Aorta (tissue), 5 donors: ENCODE measurements at regions of chr5 and their contacts with region 1.

Region 1: DNA sequence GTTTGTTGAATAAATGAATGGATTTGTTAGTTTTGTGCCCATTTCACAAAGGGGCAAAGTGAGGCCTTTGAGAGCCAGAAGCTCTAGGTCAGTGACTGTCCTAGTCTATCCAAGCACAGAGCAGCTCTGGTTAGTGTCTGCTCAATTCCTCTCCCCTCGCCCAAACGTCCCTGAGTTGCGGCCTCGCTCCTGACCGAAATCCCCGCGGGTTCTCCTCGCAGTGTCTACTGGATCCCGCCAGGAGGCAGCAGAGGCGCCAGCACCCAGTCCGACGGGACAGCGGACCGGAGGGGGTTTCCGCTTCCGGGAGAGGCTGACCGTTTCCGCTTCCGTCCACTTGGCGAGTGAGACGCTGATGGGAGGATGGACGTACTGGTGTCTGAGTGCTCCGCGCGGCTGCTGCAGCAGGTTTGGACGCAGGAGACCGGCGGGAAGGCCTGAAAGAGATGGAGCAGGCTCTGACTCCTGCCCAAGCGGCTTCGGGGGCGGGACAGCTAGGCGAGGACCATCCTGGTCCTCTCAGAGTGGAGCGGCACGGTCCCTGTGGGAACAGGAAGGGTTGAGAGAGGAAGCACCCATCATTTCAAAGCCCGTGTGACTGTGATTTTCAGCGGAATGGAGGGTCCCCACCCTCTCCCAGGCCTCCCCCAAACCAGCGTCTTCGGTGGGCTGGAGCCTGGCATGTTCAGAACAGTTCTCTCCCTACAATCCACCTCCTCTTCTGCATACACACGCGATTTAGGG is at the start of gene RARS1:
- DNase-seq: peak; percentile 96 to 98
- ATAC-seq: peak; percentile 100
- H3K4me3 ChIP-seq: peak within 1 kb of the TSS; percentile 43 to 55
- H3K27ac ChIP-seq: peak within 1 kb of the TSS in 1 of 2 donors; percentile 47
- H3K4me1 ChIP-seq: no peaks in the 10 kb centered on the region
- H3K27me3 ChIP-seq: peaks cover 0 to 3% of the 10 kb centered on the region in 2 donors
- total RNA-seq, gene RARS1: 63.2 to 66.2 TPM

Region 2: DNA sequence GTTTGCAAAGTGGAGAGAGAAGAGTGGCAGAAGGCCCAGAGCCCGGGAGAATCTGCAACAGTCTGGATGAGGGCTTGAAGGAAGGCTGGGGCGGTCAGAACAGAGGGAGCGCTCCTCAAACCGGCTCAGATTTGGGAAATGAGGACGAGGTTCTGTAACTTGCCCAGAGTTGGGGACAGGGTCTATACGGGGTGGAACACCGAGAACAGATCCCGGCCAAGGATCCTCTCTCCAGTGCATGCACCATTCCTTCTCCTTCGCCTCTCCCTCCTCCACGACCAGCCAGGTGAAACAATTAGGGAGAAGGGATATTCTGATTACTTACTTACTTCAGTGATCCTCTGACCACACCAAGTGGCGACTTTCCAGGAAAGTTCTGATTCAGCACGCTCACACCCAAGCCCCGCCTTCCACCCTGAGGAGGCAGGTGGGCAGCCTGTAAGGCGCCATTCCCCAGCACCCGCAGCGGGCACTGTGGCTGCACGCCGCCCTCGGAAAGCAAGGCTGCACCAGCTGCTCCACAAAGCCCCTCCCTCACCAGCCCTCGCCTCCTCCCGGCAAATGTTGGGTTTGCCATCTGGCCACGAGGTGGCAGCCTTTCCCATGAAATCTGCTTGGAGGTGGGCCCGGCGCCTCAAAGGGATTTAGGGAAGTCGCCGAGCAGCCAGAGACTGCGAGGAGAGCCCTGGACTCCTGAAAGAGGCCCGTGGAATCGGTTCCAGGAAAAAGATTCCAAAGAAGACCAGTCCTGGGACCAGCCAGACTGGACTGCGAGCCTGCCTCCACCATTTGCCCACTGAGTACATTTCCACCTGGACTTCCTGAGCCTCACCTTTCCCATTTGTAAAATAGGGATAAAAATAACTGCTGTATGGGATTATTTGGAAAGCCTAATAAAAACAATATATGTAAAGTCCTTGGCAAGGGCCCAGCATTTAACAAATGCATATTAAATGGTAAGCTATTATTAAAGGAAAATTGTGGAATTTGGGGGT is 217.1 kb before region 1 on chr5:
- intact Hi-C with region 1: loop called (anchors 2 to 10 kb)
- DNase-seq: peak; percentile 88 to 93
- ATAC-seq: peak; percentile 84
- H3K4me3 ChIP-seq: no peak overlapping the region
- H3K27ac ChIP-seq: no peak overlapping the region
- H3K4me1 ChIP-seq: no peaks in the 10 kb centered on the region
- H3K27me3 ChIP-seq: no peaks in the 10 kb centered on the region

Region 3: GRCh38 chr5:168579488-168580226 is 93.3 kb after region 1 on chr5:
- intact Hi-C with region 1: loop called (anchors 5 to 10 kb)
- DNase-seq: peak; percentile 99
- ATAC-seq: peak; percentile 100
- H3K4me3 ChIP-seq: peak overlapping the region; percentile 31 to 86
- H3K27ac ChIP-seq: peak overlapping the region; percentile 52 to 72
- H3K4me1 ChIP-seq: no peaks in the 10 kb centered on the region
- H3K27me3 ChIP-seq: no peaks in the 10 kb centered on the region